ENCODE measurements at regions of chr7 and their contacts with region 1.

Region 1: DNA sequence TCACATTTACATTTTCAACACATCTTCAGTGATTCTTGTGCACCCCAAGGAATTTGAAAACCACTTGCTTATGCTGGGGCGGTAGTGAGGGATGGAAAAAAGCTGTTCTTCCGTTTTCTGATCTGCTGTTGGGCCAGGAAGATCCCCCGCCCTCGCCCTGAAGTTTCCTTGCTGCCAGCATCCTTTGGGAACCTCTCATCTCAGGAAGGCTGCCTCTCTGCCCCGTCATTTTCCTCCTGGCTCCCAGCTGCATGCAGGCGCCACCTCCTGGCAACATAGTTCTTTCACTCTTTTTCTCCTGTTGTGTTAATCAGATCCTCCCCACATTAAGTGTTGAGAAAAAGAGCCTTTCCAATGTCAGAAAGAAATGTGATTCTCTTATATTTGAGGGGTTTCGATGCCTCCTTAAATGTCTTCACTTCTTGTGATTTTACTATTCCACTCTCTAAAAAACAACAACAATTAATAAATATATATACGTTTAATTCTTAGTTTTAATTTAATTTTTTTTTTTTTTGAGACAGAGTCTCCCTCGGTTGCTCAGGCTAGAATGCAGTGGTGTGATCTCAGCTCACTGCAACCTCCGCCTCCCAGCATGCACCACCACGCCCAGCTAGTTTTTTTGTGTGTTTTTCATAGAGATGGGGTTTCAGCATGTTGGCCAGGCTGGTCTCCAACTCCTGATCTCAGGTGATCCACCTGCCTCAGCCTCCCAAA is 122.9 kb downstream of the RALA start:
- DNase-seq: no peak
- H3K4me3 ChIP-seq: no peak overlapping the region
- H3K27ac ChIP-seq: no peak overlapping the region
- H3K4me1 ChIP-seq: peaks cover 0 to 46% (median 5%) of the 10 kb centered on the region in 3 donors
- H3K27me3 ChIP-seq: no peaks in the 10 kb centered on the region
- CTCF ChIP-seq: peak; percentile 43 to 86 (median 77)
- POLR2A ChIP-seq: no peak

Region 2: GRCh38 chr7:39577229-39577874 is 168.9 kb before region 1 on chr7:
- intact Hi-C with region 1: loop called (anchors 5 kb)
- DNase-seq: no peak
- H3K4me3 ChIP-seq: no peak overlapping the region
- H3K27ac ChIP-seq: no peak overlapping the region
- H3K4me1 ChIP-seq: no peaks in the 10 kb centered on the region
- H3K27me3 ChIP-seq: no peaks in the 10 kb centered on the region
- CTCF ChIP-seq: no peak
- POLR2A ChIP-seq: no peak

Region 3: DNA sequence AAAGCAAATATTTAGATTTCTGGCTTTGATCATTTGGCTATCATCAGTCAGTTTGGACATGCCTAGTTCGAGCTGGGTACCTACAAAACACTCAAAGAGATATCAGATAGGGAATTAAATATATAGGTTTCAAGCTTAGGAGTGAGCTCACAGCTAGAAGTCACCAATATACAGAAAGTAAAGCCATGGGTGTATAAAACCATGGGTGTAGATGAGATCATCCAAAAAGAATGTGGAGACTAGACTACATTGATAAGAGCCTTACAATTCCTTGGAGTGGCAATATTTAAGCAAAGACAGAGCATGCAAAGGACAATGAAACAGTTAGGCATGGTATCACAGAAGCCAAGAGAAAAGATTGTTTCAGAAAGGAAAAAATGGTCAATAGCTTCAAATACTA is 130.1 kb before region 1 on chr7:
- intact Hi-C with region 1: loop called (anchors 10 kb)
- DNase-seq: no peak
- H3K4me3 ChIP-seq: no peak overlapping the region
- H3K27ac ChIP-seq: no peak overlapping the region
- H3K4me1 ChIP-seq: peaks cover 0 to 4% (median 0%) of the 10 kb centered on the region in 3 donors
- H3K27me3 ChIP-seq: peaks cover 0 to 19% (median 0%) of the 10 kb centered on the region in 4 donors
- CTCF ChIP-seq: no peak
- POLR2A ChIP-seq: no peak

Region 4: DNA sequence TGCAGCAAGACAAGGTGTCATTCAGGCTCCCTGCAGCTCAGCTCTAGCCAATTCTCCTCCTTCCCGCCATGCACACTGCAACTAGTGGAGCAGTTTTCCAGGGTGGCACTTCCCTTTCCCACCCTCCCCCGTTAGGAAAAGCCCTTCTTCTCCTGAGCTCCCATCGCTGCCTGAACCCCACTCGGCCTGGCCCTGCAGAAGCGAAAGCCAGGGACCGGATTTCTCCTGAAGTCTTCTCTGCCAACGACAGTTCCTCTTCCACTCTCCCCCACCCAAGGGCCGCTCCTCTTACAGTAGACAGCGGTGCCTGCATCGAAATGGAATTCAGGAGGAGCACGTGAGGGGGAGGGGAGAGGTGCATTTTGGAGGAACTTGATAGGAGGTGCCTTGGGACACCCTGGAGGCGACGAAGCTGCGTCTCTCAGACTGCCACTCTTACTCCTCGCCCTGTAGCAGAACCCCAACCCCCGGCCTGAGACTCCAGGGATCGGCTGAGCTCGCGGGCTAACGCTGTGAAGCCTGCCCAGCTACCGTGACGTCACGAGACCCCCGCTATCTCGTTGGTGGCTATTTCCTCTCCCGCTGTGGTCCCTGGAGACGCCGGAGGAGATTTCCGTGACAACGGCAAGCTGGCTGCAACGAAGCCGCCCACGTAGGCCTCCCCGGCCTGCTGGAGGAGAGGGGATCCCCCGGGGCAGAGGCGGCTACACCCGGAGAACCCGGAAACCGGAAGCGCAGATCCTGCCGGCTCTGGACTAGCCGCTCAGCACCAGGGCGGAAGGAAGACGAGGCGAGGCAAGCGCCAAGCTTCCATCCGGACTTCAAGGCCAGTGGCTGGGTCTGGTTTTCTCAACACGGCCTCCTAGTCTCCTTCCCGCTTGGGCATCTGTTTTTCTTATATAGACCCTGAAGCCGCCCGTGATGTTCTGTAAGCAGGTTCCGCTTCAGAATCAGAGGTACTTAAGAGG is 13.1 kb before region 1 on chr7:
- intact Hi-C with region 1: no loop called
- DNase-seq: peak; percentile 76
- H3K4me3 ChIP-seq: peak overlapping the region; percentile 34 to 72 (median 55)
- H3K27ac ChIP-seq: peak overlapping the region; percentile 82 to 89 (median 85)
- H3K4me1 ChIP-seq: peaks cover 20 to 54% (median 28%) of the 10 kb centered on the region in 3 donors
- H3K27me3 ChIP-seq: no peaks in the 10 kb centered on the region
- CTCF ChIP-seq: no peak
- POLR2A ChIP-seq: peak in 2 of 4 donors; percentile 13 to 34

Measured in esophagus squamous epithelium (tissue), 5 donors.